ENCODE measurements at regions of chr18 and their contacts with region 1.

Region 1: DNA sequence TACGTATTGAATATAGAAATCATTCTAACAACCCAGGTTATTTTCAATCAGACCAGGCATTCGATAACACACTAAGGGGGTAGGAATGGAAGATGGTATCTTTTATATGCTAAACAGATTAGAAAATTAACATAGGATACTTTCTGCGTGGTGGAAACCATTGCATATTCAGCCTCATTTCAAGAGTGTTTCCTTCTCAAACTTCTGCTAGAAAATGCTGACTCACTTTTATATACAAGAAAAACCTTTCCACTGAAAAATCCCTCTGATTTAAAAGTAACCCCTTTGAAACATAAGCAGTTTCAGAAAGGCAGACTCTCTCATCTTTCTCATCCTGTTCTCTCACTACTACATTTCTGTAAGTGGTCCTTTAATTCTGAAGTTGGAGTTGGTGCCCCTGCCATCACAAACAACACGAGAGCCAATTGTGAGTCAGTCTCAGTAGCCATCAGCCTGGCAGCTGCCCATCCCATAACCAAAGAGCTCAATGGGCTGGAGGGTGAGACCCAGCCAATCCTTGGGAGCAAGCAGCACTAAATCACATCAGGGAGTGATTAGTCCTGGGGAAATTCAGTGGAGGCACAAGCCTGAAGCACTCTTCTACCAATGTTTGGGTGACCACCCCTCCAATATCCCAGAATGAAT is 343.1 kb downstream of the CELF4 start:
- DNase-seq: no peak
- H3K4me3 ChIP-seq: no peak overlapping the region
- H3K4me3 Mint-ChIP-seq: no peak overlapping the region
- H3K27ac ChIP-seq: no peak overlapping the region
- H3K27ac Mint-ChIP-seq: no peak overlapping the region
- H3K4me1 ChIP-seq: no peaks in the 10 kb centered on the region
- H3K4me1 Mint-ChIP-seq: no peaks in the 10 kb centered on the region
- H3K27me3 ChIP-seq: no peaks in the 10 kb centered on the region
- H3K27me3 Mint-ChIP-seq: peaks cover 0 to 2% (median under 1%) of the 10 kb centered on the region in 3 donors
- CTCF ChIP-seq: no peak

Region 2: GRCh38 chr18:37170984-37171383 is 51.5 kb before region 1 on chr18:
- intact Hi-C with region 1: loop called in 1 of 2 experiments (anchors 5 kb)
- DNase-seq: no peak
- H3K4me3 ChIP-seq: no peak overlapping the region
- H3K4me3 Mint-ChIP-seq: no peak overlapping the region
- H3K27ac ChIP-seq: no peak overlapping the region
- H3K27ac Mint-ChIP-seq: no peak overlapping the region
- H3K4me1 ChIP-seq: no peaks in the 10 kb centered on the region
- H3K4me1 Mint-ChIP-seq: no peaks in the 10 kb centered on the region
- H3K27me3 ChIP-seq: no peaks in the 10 kb centered on the region
- H3K27me3 Mint-ChIP-seq: no peaks in the 10 kb centered on the region
- CTCF ChIP-seq: no peak

Region 3: DNA sequence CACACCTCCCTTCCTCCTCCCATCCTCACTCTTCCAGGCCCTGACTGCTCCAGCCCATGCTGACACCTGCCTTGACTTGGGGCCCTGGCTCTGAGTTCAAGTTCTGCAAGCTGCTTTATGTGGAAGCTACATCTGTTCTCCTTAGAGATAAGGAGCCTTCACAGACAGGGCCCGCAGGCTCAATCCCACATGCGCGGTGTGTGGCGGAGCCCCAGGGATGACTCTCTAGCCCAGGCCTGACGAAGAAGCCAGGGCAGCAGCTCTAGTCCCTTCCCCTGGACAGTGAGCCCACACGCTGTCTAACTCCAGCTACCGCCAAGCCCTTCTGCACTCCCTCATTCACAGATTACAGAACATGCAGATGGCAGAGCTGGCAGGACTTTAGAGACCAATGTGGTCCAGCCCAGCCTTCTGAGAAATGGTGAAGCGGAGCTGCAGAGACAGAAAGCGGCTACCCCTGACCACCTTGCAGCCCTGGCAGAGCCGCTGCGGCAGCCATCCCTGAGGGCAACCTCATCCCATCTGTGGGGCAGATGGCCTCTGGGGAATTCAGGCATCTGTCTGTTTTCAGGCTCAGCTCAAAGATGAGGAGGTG is 38.9 kb after region 1 on chr18:
- intact Hi-C with region 1: no loop called
- DNase-seq: no peak
- H3K4me3 ChIP-seq: no peak overlapping the region
- H3K4me3 Mint-ChIP-seq: no peak overlapping the region
- H3K27ac ChIP-seq: no peak overlapping the region
- H3K27ac Mint-ChIP-seq: no peak overlapping the region
- H3K4me1 ChIP-seq: no peaks in the 10 kb centered on the region
- H3K4me1 Mint-ChIP-seq: no peaks in the 10 kb centered on the region
- H3K27me3 ChIP-seq: peaks cover 0 to 6% of the 10 kb centered on the region in 2 donors
- H3K27me3 Mint-ChIP-seq: peaks cover 10 to 14% (median 13%) of the 10 kb centered on the region in 3 donors
- CTCF ChIP-seq: no peak

Region 4: GRCh38 chr18:37282386-37283037 is 60.0 kb after region 1 on chr18:
- intact Hi-C with region 1: no loop called
- DNase-seq: no peak
- H3K4me3 ChIP-seq: no peak overlapping the region
- H3K4me3 Mint-ChIP-seq: peak overlapping the region in 1 of 2 donors; percentile 12
- H3K27ac ChIP-seq: no peak overlapping the region
- H3K27ac Mint-ChIP-seq: no peak overlapping the region
- H3K4me1 ChIP-seq: no peaks in the 10 kb centered on the region
- H3K4me1 Mint-ChIP-seq: no peaks in the 10 kb centered on the region
- H3K27me3 ChIP-seq: no peaks in the 10 kb centered on the region
- H3K27me3 Mint-ChIP-seq: peaks cover 2 to 14% (median 8%) of the 10 kb centered on the region in 3 donors
- CTCF ChIP-seq: peak; percentile 8